Naive thymus-derived CD4-positive, alpha-beta T cell (primary cell): ENCODE measurements at regions of chr2 and their contacts with region 1.

Region 1: DNA sequence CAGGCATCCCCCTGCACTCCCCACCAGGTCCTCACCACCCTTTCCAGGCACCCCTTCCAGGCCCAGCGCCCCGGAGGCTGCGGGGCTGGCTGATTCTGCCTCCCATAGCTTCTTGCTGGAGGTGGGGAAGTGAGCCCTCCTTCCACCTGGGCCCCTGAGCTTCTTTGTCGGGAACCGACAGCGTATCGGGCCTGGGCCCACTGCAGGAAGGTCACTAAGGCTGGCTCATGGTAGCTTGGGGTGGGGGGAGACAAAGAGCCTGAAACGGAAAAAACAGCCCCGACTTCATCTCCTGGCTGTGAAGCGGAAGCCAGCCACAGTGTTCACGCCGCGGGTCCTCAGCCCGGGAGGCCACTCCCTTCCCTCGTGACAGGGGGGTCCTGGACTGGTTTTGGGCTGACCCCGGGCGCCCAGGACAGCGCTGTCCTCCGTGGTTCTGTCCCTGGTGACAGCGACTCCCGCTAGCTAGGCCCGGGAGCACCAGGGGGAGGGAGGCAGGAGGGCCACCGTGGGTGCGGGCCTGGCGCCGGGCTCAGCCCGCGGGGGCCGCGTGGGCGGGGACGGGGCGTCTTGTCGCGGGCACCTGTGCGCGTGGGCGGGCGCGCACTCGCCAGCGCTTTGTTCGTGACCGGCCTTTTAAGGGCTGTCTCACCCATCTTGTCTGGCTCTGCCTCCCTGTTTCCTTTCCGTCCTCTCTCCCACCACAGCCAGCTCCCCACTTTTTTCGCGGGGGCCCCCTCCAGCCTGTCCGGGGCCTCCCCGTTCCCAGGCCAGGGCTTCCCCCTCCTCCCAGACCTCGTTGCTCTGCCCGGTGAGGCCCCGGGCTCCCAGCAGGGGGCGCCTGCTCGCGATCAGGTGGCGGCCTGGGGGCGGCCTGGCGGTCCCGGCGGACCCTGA is 64.9 kb downstream of the DNMT3A start:
- DNase-seq: peak; percentile 59 to 89 (median 70)
- ATAC-seq: peak; percentile 50
- H3K4me3 ChIP-seq: peak overlapping the region; percentile 53
- H3K4me3 Mint-ChIP-seq: peak overlapping the region; percentile 71 to 83 (median 79)
- H3K27ac ChIP-seq: peak overlapping the region; percentile 92
- H3K27ac Mint-ChIP-seq: peak overlapping the region; percentile 88 to 100 (median 99)
- H3K4me1 ChIP-seq: peaks cover 54 to 82% of the 10 kb centered on the region in 2 donors
- H3K4me1 Mint-ChIP-seq: peaks cover 52 to 89% (median 80%) of the 10 kb centered on the region in 7 donors
- H3K27me3 ChIP-seq: no peaks in the 10 kb centered on the region
- H3K27me3 Mint-ChIP-seq: no peaks in the 10 kb centered on the region

Region 2: GRCh38 chr2:25041928-25042320 is 234.9 kb before region 1 on chr2 and contains the start of gene EFR3B:
- CTCF ChIA-PET with region 1: no interaction called
- POLR2A ChIA-PET with region 1: no interaction called
- intact Hi-C with region 1: loop called in 1 of 2 experiments (anchors 10 kb)
- DNase-seq: peak; percentile 77 to 88 (median 86)
- ATAC-seq: peak; percentile 99
- H3K4me3 ChIP-seq: peak within 1 kb of the TSS; percentile 73
- H3K4me3 Mint-ChIP-seq: peak within 1 kb of the TSS; percentile 79 to 91 (median 89)
- H3K27ac ChIP-seq: peak within 1 kb of the TSS; percentile 18
- H3K27ac Mint-ChIP-seq: peak within 1 kb of the TSS in 6 of 9 donors; percentile 8 to 88 (median 54)
- H3K4me1 ChIP-seq: peaks cover 13 to 17% of the 10 kb centered on the region in 2 donors
- H3K4me1 Mint-ChIP-seq: peaks cover 18 to 30% (median 20%) of the 10 kb centered on the region in 7 donors
- H3K27me3 ChIP-seq: peaks cover 7 to 8% of the 10 kb centered on the region in 2 donors
- H3K27me3 Mint-ChIP-seq: peaks cover 34 to 59% (median 37%) of the 10 kb centered on the region in 5 donors
- total RNA-seq, gene EFR3B: 0.05 to 0.08 (median 0.07) TPM in 3 of 5 experiments, not detected in the others

Region 3: GRCh38 chr2:25252281-25253105 is 24.3 kb before region 1 on chr2:
- CTCF ChIA-PET with region 1: interaction called, 18 read pairs
- POLR2A ChIA-PET with region 1: interaction called, 106 read pairs
- intact Hi-C with region 1: loop called (anchors 1 to 2 kb)
- DNase-seq: peak; percentile 36 to 67 (median 56)
- ATAC-seq: peak; percentile 77
- H3K4me3 ChIP-seq: peak overlapping the region; percentile 53
- H3K4me3 Mint-ChIP-seq: peak overlapping the region; percentile 82 to 91 (median 90)
- H3K27ac ChIP-seq: peak overlapping the region; percentile 87
- H3K27ac Mint-ChIP-seq: peak overlapping the region; percentile 70 to 93 (median 85)
- H3K4me1 ChIP-seq: peaks cover 6 to 22% of the 10 kb centered on the region in 2 donors
- H3K4me1 Mint-ChIP-seq: peaks cover 26 to 55% (median 45%) of the 10 kb centered on the region in 7 donors
- H3K27me3 ChIP-seq: no peaks in the 10 kb centered on the region
- H3K27me3 Mint-ChIP-seq: no peaks in the 10 kb centered on the region

Region 4: GRCh38 chr2:25309402-25309801 is 32.6 kb after region 1 on chr2:
- CTCF ChIA-PET with region 1: interaction called, 11 read pairs
- POLR2A ChIA-PET with region 1: interaction called, 15 read pairs
- intact Hi-C with region 1: loop called (anchors 1 to 2 kb)
- DNase-seq: peak; percentile 48 to 70 (median 62)
- ATAC-seq: peak; percentile 72
- H3K4me3 ChIP-seq: no peak overlapping the region
- H3K4me3 Mint-ChIP-seq: peak overlapping the region in 5 of 10 donors; percentile 13 to 47 (median 28)
- H3K27ac ChIP-seq: no peak overlapping the region
- H3K27ac Mint-ChIP-seq: peak overlapping the region in 8 of 9 donors; percentile 36 to 89 (median 66)
- H3K4me1 ChIP-seq: peaks cover 21 to 60% of the 10 kb centered on the region in 2 donors
- H3K4me1 Mint-ChIP-seq: peaks cover 48 to 95% (median 80%) of the 10 kb centered on the region in 7 donors
- H3K27me3 ChIP-seq: no peaks in the 10 kb centered on the region
- H3K27me3 Mint-ChIP-seq: no peaks in the 10 kb centered on the region

Region 5: DNA sequence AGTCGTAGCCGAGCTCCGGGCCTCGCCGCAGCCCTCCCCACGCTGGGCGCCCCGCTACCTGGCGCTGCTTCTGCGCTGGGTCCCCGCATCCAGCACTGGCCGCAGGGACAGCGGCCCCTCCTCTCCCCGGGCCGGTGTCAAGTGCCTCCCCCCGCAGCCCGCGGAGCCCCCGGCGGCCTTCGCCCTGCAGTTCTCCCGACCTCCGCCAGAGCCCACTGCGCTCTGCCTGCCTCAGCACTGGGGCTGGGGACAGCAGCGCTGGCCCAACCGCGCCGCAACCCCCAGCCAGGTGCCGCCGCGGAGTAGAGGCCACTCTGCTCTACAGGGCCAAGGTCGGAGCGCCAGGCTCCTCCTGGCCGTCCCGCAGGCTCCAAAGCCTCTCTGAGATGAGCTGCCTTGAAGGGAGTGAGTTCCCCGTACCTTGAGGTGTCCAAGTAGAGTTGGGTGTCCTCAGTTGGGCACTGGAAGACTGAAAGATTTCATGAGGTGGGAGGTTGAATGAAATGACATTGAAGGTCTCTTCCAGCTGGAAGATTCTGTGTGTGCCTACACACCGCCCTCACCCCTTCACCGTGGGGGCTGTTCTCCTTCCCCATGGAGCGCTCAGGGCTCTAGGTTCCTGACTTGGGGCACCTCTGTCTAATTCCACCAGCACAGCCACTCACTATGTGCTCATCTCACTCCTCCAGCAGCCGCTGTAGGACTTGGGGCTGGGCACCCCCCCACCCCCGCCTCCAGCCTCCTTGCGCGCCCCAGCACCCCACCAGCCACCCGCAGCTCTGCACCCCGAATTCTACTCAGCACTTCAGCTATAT is 65.8 kb after region 1 on chr2:
- CTCF ChIA-PET with region 1: interaction called, 4 read pairs
- POLR2A ChIA-PET with region 1: interaction called, 25 read pairs
- intact Hi-C with region 1: loop called in 1 of 2 experiments (anchors 1 kb)
- DNase-seq: peak; percentile 67 to 88 (median 77)
- ATAC-seq: peak; percentile 95
- H3K4me3 ChIP-seq: peak overlapping the region; percentile 56
- H3K4me3 Mint-ChIP-seq: peak overlapping the region; percentile 68 to 88 (median 78)
- H3K27ac ChIP-seq: no peak overlapping the region
- H3K27ac Mint-ChIP-seq: peak overlapping the region in 6 of 9 donors; percentile 10 to 89 (median 56)
- H3K4me1 ChIP-seq: peaks cover 5 to 29% of the 10 kb centered on the region in 2 donors
- H3K4me1 Mint-ChIP-seq: peaks cover 18 to 30% (median 27%) of the 10 kb centered on the region in 7 donors
- H3K27me3 ChIP-seq: no peaks in the 10 kb centered on the region
- H3K27me3 Mint-ChIP-seq: no peaks in the 10 kb centered on the region

Region 6: DNA sequence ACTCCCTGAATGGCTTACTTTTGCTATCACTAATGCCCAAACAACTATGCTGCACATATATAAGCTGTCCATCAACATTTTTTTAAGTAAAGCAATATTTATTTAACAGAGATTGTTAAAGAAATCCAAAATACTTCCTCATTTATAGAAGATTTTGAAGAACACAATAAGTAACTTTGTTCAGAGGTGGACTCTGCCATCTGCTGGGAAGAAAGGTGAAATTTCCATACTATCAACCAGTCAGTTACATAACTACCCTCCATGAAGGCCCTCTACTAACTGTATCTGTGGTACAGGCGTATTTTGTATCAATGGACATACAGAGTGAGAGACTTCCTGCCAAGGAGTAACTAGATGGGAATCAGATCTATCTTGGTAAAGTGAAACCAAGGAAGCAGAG is 290.6 kb after region 1 on chr2:
- CTCF ChIA-PET with region 1: no interaction called
- POLR2A ChIA-PET with region 1: no interaction called
- intact Hi-C with region 1: loop called in 1 of 2 experiments (anchors 1 kb)
- DNase-seq: peak in 4 of 9 donors; percentile 6 to 27 (median 16)
- ATAC-seq: peak; percentile 67
- H3K4me3 ChIP-seq: no peak overlapping the region
- H3K4me3 Mint-ChIP-seq: no peak overlapping the region
- H3K27ac ChIP-seq: no peak overlapping the region
- H3K27ac Mint-ChIP-seq: peak overlapping the region in 1 of 9 donors; percentile 47
- H3K4me1 ChIP-seq: no peaks in the 10 kb centered on the region
- H3K4me1 Mint-ChIP-seq: peaks cover 0 to 14% (median 4%) of the 10 kb centered on the region in 7 donors
- H3K27me3 ChIP-seq: no peaks in the 10 kb centered on the region
- H3K27me3 Mint-ChIP-seq: no peaks in the 10 kb centered on the region

Region 7: DNA sequence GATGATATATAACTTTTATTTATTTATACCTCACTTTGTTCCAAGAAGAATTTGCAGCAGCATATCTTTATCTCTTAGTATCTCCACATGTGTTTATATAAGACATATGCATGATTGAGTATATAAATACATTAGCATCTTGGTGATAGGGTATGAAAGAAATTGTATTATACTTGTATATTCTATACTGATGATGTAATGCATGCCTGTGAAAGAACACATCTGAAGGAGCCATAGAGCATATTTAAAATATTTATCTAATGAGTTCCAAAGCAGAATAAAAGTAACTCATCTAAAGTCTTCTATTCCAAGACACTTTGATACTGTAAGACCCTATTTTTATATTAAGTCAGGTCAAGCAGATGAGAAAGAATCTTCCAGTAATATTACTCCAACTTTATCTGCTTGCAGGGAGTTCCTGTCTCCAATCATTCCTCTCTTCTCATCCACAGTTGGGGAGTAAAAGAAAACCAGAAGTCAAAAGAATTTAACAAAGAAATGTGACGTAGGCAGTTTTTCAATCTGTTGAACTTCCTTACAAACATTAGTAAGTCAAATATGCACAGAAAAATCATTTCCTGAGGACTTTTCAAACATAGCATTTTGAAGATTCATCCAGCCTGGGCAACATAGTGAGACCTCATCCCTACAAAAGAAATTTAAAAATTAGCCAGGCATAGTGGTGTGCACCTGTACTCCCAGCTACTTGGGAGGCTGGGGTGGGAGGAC is 319.9 kb after region 1 on chr2:
- CTCF ChIA-PET with region 1: no interaction called
- POLR2A ChIA-PET with region 1: no interaction called
- intact Hi-C with region 1: no loop called
- DNase-seq: no peak
- ATAC-seq: no peak
- H3K4me3 ChIP-seq: no peak overlapping the region
- H3K4me3 Mint-ChIP-seq: no peak overlapping the region
- H3K27ac ChIP-seq: no peak overlapping the region
- H3K27ac Mint-ChIP-seq: peak overlapping the region in 1 of 9 donors; percentile 7
- H3K4me1 ChIP-seq: no peaks in the 10 kb centered on the region
- H3K4me1 Mint-ChIP-seq: peaks cover 5 to 38% (median 16%) of the 10 kb centered on the region in 7 donors
- H3K27me3 ChIP-seq: no peaks in the 10 kb centered on the region
- H3K27me3 Mint-ChIP-seq: no peaks in the 10 kb centered on the region

Region 8: GRCh38 chr2:25794544-25795276 is 517.9 kb after region 1 on chr2:
- CTCF ChIA-PET with region 1: no interaction called
- POLR2A ChIA-PET with region 1: no interaction called
- intact Hi-C with region 1: no loop called
- DNase-seq: peak in 6 of 9 donors; percentile 33 to 61 (median 47)
- ATAC-seq: peak; percentile 90
- H3K4me3 ChIP-seq: peak overlapping the region; percentile 23
- H3K4me3 Mint-ChIP-seq: peak overlapping the region; percentile 68 to 92 (median 86)
- H3K27ac ChIP-seq: peak overlapping the region; percentile 63
- H3K27ac Mint-ChIP-seq: peak overlapping the region; percentile 87 to 97 (median 95)
- H3K4me1 ChIP-seq: peaks cover 43 to 51% of the 10 kb centered on the region in 2 donors
- H3K4me1 Mint-ChIP-seq: peaks cover 48 to 95% (median 86%) of the 10 kb centered on the region in 7 donors
- H3K27me3 ChIP-seq: no peaks in the 10 kb centered on the region
- H3K27me3 Mint-ChIP-seq: no peaks in the 10 kb centered on the region